ENCODE measurements at regions of chr9 and their contacts with region 1.

Region 1: DNA sequence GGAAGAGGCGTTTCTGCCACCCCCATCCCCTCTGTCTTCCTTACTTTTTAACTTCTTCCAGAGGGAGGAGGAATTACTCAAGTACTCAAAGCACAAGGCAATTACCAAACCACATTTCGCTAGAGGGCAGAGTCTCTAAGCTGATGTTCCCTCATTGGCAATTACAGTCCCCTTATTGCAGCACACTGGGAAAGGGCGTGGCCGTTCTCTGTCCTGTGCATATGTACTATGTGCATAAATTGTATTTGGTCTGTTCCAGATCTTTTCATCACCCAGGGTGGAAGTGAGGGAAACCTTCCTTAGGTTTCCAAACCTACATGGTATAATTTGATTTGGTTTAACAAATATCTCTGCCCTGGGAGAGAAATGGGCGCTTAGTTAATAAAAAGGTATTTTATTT is 29.8 kb upstream of the ALDOB start:
- DNase-seq: no peak
- H3K4me3 ChIP-seq: no peak overlapping the region
- CTCF ChIP-seq: peak; percentile 55

Region 2: DNA sequence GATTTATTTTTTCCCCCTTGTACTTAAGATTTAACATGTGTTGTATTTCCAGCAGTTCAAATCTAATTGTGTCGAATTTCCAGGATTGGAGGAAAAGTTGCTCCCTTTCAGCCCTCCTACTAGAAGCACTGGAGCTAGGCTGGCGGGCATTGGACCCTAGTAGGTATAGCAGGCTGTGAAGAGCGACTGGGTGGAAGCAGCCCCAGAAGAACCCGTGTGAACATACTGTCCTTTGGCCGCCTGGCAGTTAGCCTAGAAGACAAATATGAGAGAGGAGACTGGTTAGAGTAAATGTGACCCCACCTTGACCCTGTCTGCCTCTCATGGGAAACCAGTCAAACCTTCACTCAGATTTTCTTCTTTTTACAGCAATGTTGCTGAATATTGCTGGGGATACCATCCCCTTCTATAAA is 43.7 kb before region 1 on chr9:
- CTCF ChIA-PET with region 1: no interaction called
- POLR2A ChIA-PET with region 1: no interaction called
- DNase-seq: no peak
- H3K4me3 ChIP-seq: no peak overlapping the region
- CTCF ChIP-seq: no peak

Region 3: GRCh38 chr9:101479338-101480030 is 14.1 kb after region 1 on chr9:
- CTCF ChIA-PET with region 1: interaction called, 14 read pairs
- POLR2A ChIA-PET with region 1: interaction called, 3 read pairs
- DNase-seq: no peak
- H3K4me3 ChIP-seq: no peak overlapping the region
- CTCF ChIP-seq: no peak

Region 4: DNA sequence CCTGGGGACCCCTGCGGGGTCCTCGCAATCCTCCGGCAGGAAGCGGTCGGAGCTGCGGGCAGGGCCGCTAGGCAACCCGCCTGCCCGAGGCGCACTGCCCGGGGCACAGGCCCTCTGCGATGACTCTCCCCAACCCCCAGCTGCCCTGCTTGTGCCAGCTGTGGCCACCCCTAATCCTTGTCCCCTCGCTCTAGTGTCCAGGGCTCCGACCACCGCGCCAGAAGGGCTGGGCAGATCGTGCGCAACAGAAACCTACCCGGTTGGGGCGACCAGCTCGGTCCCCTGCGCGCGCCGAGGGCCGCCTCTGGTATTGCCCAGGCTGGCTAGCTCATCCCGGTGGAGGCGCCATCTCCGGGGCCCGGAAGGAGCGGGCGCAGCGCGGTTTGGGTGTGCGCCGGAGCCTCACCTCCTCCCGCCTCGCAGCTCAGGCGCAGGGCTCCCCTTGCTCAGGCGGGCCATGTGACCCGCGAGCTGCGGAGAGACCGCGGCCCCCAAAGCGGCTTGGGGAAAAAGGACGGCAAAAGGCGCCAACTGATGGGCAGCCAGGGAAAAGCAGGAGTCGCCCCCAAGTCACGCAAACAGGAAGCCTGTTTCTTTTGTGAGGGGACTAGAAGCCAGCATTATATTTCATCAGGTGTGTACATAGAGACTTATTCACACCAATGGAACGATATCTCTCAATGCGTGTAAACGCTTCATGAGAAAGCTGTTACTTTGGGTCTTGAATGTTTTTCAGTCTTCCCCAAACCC is 21.5 kb after region 1 on chr9:
- CTCF ChIA-PET with region 1: interaction called, 20 read pairs
- POLR2A ChIA-PET with region 1: no interaction called
- DNase-seq: no peak
- H3K4me3 ChIP-seq: peak overlapping the region; percentile 71
- CTCF ChIP-seq: peak; percentile 38

Measured in AG04449 (cell line).